WTC11 (cell line): ENCODE measurements at regions of chr4 and their contacts with region 1.

Region 1: DNA sequence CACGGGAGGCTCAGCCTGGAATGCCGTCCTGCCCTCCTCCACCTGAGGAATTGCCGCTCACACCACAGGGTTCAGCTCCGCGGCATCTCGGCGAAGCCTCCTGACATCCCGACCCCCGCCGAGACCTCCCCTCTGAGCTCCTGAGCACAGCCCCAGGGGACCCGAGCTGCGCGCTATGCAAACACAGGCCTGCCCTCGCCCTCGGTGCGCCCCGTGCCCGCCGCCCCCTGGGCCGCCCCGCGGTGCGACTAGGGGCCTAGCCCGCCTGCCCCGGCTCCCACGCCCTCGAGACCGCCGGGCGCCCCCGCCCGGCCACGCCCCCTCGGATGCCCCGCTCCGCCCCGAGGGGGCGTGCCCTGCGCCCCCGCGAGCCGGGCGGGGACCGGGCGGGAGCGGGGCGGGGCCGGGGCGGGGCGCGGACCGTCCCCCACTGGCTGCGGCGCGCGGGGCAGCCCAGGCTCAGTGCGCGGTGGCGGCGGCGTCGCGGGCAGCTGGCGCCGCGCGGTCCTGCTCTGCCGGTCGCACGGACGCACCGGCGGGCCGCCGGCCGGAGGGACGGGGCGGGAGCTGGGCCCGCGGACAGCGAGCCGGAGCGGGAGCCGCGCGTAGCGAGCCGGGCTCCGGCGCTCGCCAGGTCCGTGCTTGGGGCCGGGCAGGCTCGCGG is at the start of gene FGFR3:
- DNase-seq: peak; percentile 78
- ATAC-seq: peak; percentile 71
- H3K4me3 Mint-ChIP-seq: peak within 1 kb of the TSS; percentile 54
- H3K27ac Mint-ChIP-seq: no peak within 1 kb of the TSS
- H3K4me1 Mint-ChIP-seq: no peaks in the 10 kb centered on the region
- H3K27me3 Mint-ChIP-seq: peaks cover 51% of the 10 kb centered on the region
- CTCF ChIP-seq: no peak
- total RNA-seq, gene FGFR3: 18.2 to 19.9 TPM (median 19.7 TPM) in 3 replicates

Region 2: DNA sequence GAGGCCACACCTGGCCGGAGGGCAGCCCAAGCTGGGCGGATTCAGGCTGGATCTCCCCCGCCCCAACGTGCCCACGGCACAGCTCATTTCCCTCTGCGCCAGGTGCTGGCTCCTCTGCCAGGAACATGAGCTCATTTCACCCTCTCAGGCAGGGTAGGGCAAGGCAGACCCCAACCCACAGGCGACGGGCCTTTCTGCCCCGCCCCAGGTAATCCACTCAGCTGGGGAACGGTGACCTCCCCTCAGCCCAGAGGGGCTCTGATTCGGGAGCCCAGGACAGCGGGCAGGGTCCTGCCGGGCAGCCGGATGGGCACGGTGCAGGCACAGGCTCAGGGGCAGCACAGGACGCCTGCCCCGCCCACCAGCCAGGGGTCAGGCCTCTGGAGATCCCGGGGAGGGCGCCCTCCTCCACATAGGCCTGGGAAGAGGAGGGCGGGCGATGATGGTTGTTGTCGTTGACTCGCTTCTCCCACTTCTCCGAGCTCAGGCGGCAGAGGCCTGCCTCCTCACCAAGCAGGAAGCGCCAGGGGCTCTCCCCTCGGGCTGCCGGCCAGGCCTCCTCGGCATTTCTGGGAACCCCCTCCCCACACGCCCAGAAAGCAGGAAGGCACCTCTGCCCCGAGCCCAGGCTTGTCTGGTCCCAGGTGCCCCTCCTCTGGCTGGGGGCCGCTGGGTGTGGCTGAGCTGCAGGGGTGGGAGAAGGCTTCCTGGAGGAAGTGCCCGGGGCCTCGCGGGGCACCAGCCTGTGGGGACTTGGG is 40.5 kb before region 1 on chr4:
- CTCF ChIA-PET with region 1: interaction called, 115 read pairs
- POLR2A ChIA-PET with region 1: interaction called, 4 read pairs
- DNase-seq: no peak
- ATAC-seq: peak; percentile 25
- H3K4me3 Mint-ChIP-seq: no peak overlapping the region
- H3K27ac Mint-ChIP-seq: no peak overlapping the region
- H3K4me1 Mint-ChIP-seq: no peaks in the 10 kb centered on the region
- H3K27me3 Mint-ChIP-seq: peaks cover 2% of the 10 kb centered on the region; the same call in 1 of the 2 replicates
- CTCF ChIP-seq: no peak

Region 3: DNA sequence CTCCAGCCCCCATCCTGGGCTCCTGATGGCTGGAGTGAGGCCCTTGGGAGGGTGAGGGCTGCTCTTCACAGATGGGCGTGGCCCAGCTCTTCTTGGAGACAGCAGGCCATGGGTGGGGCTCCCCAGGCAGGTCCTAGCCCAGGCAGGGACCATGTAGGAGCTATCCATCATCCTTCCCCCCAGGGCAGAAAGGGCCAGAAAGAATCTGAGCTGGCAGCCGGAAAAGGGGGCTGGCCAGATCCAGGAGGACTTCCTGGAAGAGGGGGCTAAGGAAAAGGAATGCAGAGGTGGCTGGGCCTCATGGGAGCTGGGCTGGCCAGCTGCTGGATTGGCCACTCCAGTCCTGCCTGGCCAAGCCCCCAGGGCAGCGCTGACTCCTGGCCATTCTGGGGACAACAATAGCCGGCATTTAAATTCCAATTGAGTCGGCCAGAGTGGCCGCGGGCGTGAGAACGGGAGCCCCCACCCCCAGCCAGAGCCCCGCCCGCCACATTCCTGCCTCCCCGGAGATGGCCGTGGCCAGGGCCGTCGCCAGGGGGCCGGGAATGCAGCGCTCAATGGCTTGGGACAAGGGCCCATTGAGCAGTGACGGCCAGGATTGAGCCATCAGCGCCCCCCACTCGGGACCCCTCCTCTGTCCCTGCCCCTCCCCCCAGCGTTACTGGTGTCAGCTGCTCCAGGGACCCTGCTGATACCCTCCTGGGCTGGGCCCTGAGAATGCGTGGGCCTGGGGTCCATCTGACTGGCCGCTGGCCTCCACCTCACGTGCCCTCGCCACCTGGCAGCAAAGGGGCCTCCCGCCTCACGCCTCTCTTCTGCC is 14.9 kb before region 1 on chr4:
- CTCF ChIA-PET with region 1: interaction called, 15 read pairs
- POLR2A ChIA-PET with region 1: interaction called, 7 read pairs
- DNase-seq: peak; percentile 91
- ATAC-seq: peak; percentile 72
- H3K4me3 Mint-ChIP-seq: no peak overlapping the region
- H3K27ac Mint-ChIP-seq: no peak overlapping the region
- H3K4me1 Mint-ChIP-seq: peaks cover 15% of the 10 kb centered on the region; the same call in 1 of the 2 replicates
- H3K27me3 Mint-ChIP-seq: no peaks in the 10 kb centered on the region
- CTCF ChIP-seq: no peak